Vagina (tissue), 2 donors: ENCODE measurements at regions of chr14 and their contacts with region 1.

Region 1: GRCh38 chr14:76953196-76954000 is 75.1 kb downstream of the IRF2BPL start:
- DNase-seq: no peak
- H3K4me3 ChIP-seq: peak overlapping the region; percentile 30 to 43
- H3K27ac ChIP-seq: peak overlapping the region; percentile 95
- H3K4me1 ChIP-seq: peaks cover 81% of the 10 kb centered on the region
- H3K27me3 ChIP-seq: no peaks in the 10 kb centered on the region
- CTCF ChIP-seq: no peak
- POLR2A ChIP-seq: peak in 1 of 2 donors; percentile 21

Region 2: GRCh38 chr14:76876076-76876475 is 77.3 kb before region 1 on chr14:
- intact Hi-C with region 1: no loop called
- DNase-seq: no peak
- H3K4me3 ChIP-seq: no peak overlapping the region
- H3K27ac ChIP-seq: no peak overlapping the region
- H3K4me1 ChIP-seq: no peaks in the 10 kb centered on the region
- H3K27me3 ChIP-seq: no peaks in the 10 kb centered on the region
- CTCF ChIP-seq: peak; percentile 89 to 92 (median 90)
- POLR2A ChIP-seq: no peak

Region 3: GRCh38 chr14:77028384-77029231 is 75.2 kb after region 1 on chr14 and contains the start of gene IRF2BPL:
- intact Hi-C with region 1: loop called (anchors 5 kb)
- DNase-seq: peak in 1 of 2 donors; percentile 100
- H3K4me3 ChIP-seq: peak within 1 kb of the TSS; percentile 60 to 84
- H3K27ac ChIP-seq: peak within 1 kb of the TSS; percentile 98
- H3K4me1 ChIP-seq: peaks cover 70% of the 10 kb centered on the region
- H3K27me3 ChIP-seq: no peaks in the 10 kb centered on the region
- CTCF ChIP-seq: no peak
- POLR2A ChIP-seq: peak in 1 of 2 donors; percentile 97
- total RNA-seq, gene IRF2BPL: 51.1 TPM